ENCODE measurements at regions of chr12 and their contacts with region 1.

Region 1: DNA sequence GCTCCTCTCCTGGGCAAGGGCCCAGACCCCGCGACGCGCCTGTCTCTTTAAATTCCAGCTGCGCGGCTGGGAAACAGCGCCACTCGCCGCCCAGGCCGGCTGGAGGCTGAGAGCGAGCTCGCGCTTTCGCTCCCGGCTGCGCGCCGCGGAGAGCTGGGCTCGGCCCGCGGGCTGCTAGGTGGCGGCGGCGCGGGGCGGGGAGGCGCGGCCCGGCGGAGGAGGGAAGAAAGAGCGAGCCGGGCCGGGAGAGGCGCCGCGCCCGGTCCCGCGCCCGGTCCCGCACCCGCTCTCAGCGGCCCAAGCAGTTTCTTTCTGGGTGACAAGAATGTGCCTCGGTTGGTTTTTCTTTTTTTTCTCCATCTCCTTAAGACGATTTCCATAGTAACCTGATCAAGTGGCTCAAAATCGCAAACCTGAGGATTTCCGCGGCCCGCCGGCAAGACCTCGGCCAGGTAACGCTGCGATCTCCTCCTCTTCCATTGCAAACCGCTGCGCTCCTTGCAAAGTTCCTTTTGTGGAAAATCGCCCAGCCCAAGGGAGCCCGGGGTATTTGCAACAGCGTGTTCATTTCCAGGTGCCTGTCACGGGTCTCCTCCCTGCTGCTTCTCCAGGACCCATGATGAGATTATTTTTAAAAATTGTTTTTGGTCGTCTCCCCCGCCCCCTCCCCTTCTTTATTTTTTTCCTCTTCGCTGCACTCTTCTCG is 259.5 kb upstream of the E2F7 start:
- DNase-seq: no peak
- ATAC-seq: peak; percentile 98
- H3K4me3 ChIP-seq: peak overlapping the region; percentile 58 to 80
- H3K27ac ChIP-seq: no peak overlapping the region
- H3K4me1 ChIP-seq: no peaks in the 10 kb centered on the region; the same call in 1 of the 2 replicates
- H3K27me3 ChIP-seq: peaks cover 26% of the 10 kb centered on the region
- CTCF ChIP-seq: peak; percentile 86

Region 2: DNA sequence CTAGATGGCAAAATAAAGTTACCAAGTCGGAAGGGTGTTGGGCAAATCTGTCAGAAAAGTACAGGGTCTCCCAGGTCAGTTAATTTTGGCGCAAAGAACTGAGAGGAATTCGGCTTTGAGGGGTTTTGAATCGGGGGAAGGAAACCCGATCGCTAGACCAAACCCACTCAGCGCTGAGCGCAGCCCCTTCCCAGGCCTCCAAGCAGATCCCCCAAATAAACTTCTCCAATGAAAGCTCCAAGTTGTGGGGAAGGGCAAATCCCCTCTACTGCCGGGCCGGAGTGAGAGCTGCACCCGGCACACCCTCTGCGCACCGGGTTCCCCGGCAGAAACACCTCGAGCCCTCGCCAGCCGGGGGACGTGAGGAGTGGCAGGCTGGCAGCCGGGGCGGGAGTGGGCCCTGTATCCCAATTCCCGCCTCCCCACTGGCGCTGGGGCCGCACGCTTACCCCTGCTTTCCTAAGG is 260.0 kb before region 1 on chr12:
- CTCF ChIA-PET with region 1: no interaction called
- POLR2A ChIA-PET with region 1: no interaction called
- in situ Hi-C with region 1: no loop called
- intact Hi-C with region 1: loop called (anchors 5 kb)
- DNase-seq: no peak
- ATAC-seq: peak; percentile 62
- H3K4me3 ChIP-seq: peak overlapping the region; percentile 76 to 86
- H3K27ac ChIP-seq: peak overlapping the region; percentile 71
- H3K4me1 ChIP-seq: peaks cover 20% of the 10 kb centered on the region
- H3K27me3 ChIP-seq: no peaks in the 10 kb centered on the region
- CTCF ChIP-seq: no peak